ENCODE measurements at regions of chr12 and their contacts with region 1.

Region 1: GRCh38 chr12:46661110-46661845 is 164.5 kb downstream of the SLC38A4 start:
- DNase-seq: peak; percentile 39 to 72
- H3K4me3 ChIP-seq: no peak overlapping the region
- H3K27ac ChIP-seq: peak overlapping the region; percentile 75
- H3K4me1 ChIP-seq: peaks cover 53% of the 10 kb centered on the region
- H3K27me3 ChIP-seq: no peaks in the 10 kb centered on the region
- CTCF ChIP-seq: peak; percentile 65

Region 2: DNA sequence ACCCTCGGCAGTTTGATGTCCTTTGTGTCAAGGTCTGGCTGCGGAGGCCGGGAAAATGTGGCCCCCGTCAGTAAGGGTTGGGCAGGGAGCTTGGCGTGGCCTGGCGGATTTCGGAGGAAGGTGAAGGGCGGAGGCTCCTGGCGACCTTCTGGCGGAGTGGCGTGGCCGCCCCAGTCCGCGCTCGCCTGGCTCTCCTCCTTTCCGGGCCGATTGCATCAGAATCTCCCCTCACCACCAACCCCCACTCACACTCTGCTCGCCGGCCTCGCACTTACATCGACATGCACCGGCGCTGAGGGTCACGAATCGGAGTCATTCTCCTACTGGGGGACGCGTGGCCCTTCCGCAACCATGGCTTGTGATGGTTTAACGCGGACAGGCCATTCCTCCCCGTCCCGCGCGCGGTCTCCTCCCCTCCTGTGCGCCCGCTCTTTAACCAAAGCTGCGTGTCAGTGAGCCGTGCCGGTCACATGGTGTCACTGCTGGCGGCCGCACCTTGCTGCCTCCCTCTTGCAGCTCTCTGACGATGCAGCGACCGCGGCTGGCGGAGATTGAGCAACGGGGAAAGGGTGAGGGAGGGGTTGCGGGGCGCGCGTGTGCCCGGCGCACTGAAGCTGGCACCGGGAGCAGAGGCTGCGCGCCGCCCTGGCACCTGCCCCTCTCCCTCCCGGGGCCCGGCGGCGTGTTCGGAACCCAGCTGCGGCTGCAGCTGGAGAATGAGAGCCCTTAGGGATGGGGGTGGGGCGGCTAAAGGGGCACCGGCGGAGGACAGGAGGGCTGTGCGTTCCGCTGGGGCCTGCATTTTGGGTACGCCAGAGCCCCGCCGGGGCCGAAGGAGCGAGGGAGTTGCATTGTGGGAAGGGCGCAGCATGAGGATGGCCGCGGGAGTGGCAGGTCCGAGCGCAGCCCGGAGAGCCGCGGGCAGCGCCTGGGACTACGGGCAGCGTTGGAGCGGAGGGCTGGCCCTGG is 392.4 kb before region 1 on chr12 and contains the start of gene SLC38A1:
- CTCF ChIA-PET with region 1: no interaction called
- POLR2A ChIA-PET with region 1: no interaction called
- intact Hi-C with region 1: loop called (anchors 10 kb)
- DNase-seq: peak; percentile 89 to 90
- H3K4me3 ChIP-seq: peak within 1 kb of the TSS; percentile 89
- H3K27ac ChIP-seq: peak within 1 kb of the TSS; percentile 98
- H3K4me1 ChIP-seq: peaks cover 34% of the 10 kb centered on the region
- H3K27me3 ChIP-seq: no peaks in the 10 kb centered on the region
- CTCF ChIP-seq: no peak
- total RNA-seq, gene SLC38A1: 77.7 and 131 TPM in 2 replicates

Region 3: GRCh38 chr12:46382964-46383653 is 278.2 kb before region 1 on chr12:
- CTCF ChIA-PET with region 1: no interaction called
- POLR2A ChIA-PET with region 1: no interaction called
- intact Hi-C with region 1: loop called (anchors 1 kb)
- DNase-seq: peak; percentile 85 to 98
- H3K4me3 ChIP-seq: peak overlapping the region; percentile 92
- H3K27ac ChIP-seq: peak overlapping the region; percentile 97
- H3K4me1 ChIP-seq: peaks cover 39% of the 10 kb centered on the region
- H3K27me3 ChIP-seq: no peaks in the 10 kb centered on the region
- CTCF ChIP-seq: no peak; the same call in 1 of the 2 replicates

Region 4: GRCh38 chr12:46492471-46493351 is 168.6 kb before region 1 on chr12:
- CTCF ChIA-PET with region 1: no interaction called
- POLR2A ChIA-PET with region 1: no interaction called
- intact Hi-C with region 1: loop called (anchors 2 kb)
- DNase-seq: peak; percentile 25 to 88
- H3K4me3 ChIP-seq: peak overlapping the region; percentile 3; the same call in 1 of the 2 replicates
- H3K27ac ChIP-seq: peak overlapping the region; percentile 81
- H3K4me1 ChIP-seq: peaks cover 47% of the 10 kb centered on the region
- H3K27me3 ChIP-seq: no peaks in the 10 kb centered on the region
- CTCF ChIP-seq: no peak

Region 5: GRCh38 chr12:46562625-46563228 is 98.6 kb before region 1 on chr12:
- CTCF ChIA-PET with region 1: no interaction called
- POLR2A ChIA-PET with region 1: interaction called, 3 read pairs
- intact Hi-C with region 1: loop called (anchors 2 kb)
- DNase-seq: peak in 1 of 2 experiments; percentile 82
- H3K4me3 ChIP-seq: no peak overlapping the region
- H3K27ac ChIP-seq: peak overlapping the region; percentile 95
- H3K4me1 ChIP-seq: peaks cover 36% of the 10 kb centered on the region
- H3K27me3 ChIP-seq: no peaks in the 10 kb centered on the region
- CTCF ChIP-seq: no peak

Measured in PC-9 (cell line).